Naive thymus-derived CD4-positive, alpha-beta T cell (primary cell): ENCODE measurements at regions of chr3 and their contacts with region 1.

Region 1: GRCh38 chr3:66276705-66277274 is 56.0 kb downstream of the SLC25A26 start:
- DNase-seq: peak; percentile 19 to 68 (median 56)
- ATAC-seq: peak; percentile 81
- H3K4me3 ChIP-seq: no peak overlapping the region
- H3K4me3 Mint-ChIP-seq: no peak overlapping the region
- H3K27ac ChIP-seq: no peak overlapping the region
- H3K27ac Mint-ChIP-seq: peak overlapping the region in 5 of 9 donors; percentile 9 to 61 (median 24)
- H3K4me1 ChIP-seq: peaks cover 12 to 28% of the 10 kb centered on the region in 2 donors
- H3K4me1 Mint-ChIP-seq: peaks cover 15 to 37% (median 34%) of the 10 kb centered on the region in 7 donors
- H3K27me3 ChIP-seq: no peaks in the 10 kb centered on the region
- H3K27me3 Mint-ChIP-seq: no peaks in the 10 kb centered on the region

Region 2: DNA sequence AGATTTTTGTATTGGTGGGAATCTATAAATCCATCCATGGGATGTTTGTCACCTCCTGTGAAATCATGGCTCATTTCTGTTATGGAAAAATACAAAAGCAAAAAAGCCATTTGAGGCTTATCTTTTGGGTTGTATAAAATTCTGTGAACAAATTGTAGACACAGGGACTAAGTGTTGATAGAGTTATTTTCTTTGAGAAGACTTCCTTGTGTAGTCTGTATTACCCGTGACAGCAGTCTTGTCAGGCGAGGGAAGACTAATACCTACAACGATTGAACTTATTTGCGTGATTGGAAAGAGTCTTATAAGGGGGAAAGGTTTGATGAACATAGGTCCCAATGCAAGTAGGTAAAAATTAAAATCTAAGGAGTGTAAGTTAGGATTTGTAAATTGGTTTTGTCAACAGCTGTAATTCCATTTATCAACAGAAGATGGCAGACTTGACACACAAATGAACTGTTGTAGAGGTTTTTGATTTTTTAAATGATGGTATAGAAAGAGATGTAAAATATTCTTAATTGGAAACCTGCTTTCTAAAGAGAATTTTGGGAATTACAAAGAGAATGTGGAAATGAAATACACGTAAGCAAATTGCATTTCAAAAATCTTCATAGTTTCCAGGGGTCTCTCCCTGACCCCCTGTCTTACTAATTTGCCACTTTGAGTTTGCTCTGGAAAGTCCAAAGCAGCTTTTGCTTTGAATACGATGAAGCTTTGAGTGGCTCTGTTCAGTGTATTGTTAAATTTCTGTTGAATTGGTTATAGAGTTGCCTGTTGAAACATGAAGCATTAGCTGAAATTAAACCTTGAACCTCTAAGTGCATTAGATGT is 22.8 kb before region 1 on chr3:
- CTCF ChIA-PET with region 1: interaction called, 5 read pairs
- POLR2A ChIA-PET with region 1: no interaction called
- intact Hi-C with region 1: loop called in 1 of 2 experiments (anchors 1 kb)
- DNase-seq: peak in 5 of 9 donors; percentile 27 to 41 (median 35)
- ATAC-seq: peak; percentile 59
- H3K4me3 ChIP-seq: no peak overlapping the region
- H3K4me3 Mint-ChIP-seq: no peak overlapping the region
- H3K27ac ChIP-seq: no peak overlapping the region
- H3K27ac Mint-ChIP-seq: no peak overlapping the region
- H3K4me1 ChIP-seq: no peaks in the 10 kb centered on the region
- H3K4me1 Mint-ChIP-seq: peaks cover 3 to 13% (median 8%) of the 10 kb centered on the region in 7 donors
- H3K27me3 ChIP-seq: no peaks in the 10 kb centered on the region
- H3K27me3 Mint-ChIP-seq: no peaks in the 10 kb centered on the region

Region 3: DNA sequence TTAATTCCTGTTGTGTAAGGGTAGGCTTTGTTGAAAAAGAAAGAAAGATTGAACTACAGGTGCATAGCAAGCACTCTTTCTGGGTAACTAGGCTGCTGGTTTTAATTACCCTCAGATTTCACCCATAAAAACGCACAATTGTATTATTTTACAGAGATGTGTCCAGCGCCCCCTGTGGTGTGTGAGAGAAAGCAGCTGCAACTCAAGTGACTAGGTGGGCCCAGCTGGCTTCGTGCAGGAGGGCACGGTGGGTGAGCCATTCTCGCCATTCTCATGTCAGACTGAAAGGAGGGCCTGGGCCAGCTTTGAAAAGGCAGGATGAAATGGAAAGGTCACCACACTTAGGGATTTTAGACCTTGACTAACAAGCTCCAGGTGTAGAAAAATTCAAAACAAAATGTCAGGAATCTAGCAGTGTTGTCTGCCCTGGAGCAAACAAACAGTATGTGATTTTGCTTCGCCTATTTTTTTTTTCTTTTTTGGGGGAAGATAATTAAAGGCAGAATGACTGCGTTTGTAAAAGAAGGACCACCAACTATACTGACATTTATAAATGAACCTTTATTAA is 101.5 kb after region 1 on chr3:
- CTCF ChIA-PET with region 1: interaction called, 14 read pairs
- POLR2A ChIA-PET with region 1: no interaction called
- intact Hi-C with region 1: loop called (anchors 1 kb)
- DNase-seq: peak in 5 of 9 donors; percentile 10 to 28 (median 15)
- ATAC-seq: peak; percentile 65
- H3K4me3 ChIP-seq: no peak overlapping the region
- H3K4me3 Mint-ChIP-seq: peak overlapping the region in 1 of 10 donors; percentile 21
- H3K27ac ChIP-seq: peak overlapping the region; percentile 14
- H3K27ac Mint-ChIP-seq: peak overlapping the region; percentile 71 to 95 (median 84)
- H3K4me1 ChIP-seq: peaks cover 3 to 22% of the 10 kb centered on the region in 2 donors
- H3K4me1 Mint-ChIP-seq: peaks cover 5 to 20% (median 11%) of the 10 kb centered on the region in 7 donors
- H3K27me3 ChIP-seq: no peaks in the 10 kb centered on the region
- H3K27me3 Mint-ChIP-seq: no peaks in the 10 kb centered on the region

Region 4: DNA sequence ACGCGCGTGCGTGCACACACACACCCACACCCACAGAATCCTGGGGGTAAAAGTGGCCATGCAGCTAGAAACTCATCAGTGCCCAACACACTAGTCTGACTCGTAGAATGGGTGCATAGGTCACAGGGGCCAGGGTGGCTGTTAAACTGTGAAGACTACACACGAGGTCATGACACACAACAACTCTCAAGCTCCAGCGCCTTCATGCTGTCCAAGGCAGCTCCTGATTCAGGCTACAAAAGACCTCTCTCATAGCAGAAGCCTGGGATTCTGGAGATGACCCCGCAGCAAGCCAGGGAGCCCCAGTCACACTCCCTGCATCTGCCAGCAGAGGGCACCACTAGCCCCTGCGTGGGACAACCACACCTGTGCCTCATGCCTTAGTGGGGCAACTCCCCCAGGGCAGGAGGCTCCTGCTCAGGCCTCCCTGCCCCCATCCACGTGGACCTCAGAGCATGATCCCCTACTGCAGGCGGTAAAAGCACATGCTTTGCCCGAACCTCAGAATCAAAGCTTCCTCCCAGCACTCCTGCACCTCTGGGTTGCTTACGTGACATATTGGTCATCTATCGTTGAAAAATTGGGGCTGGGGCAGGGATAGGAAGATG is 130.9 kb after region 1 on chr3:
- CTCF ChIA-PET with region 1: interaction called, 15 read pairs
- POLR2A ChIA-PET with region 1: no interaction called
- intact Hi-C with region 1: loop called (anchors 1 to 2 kb)
- DNase-seq: peak; percentile 45 to 79 (median 65)
- ATAC-seq: peak; percentile 89
- H3K4me3 ChIP-seq: no peak overlapping the region
- H3K4me3 Mint-ChIP-seq: no peak overlapping the region
- H3K27ac ChIP-seq: no peak overlapping the region
- H3K27ac Mint-ChIP-seq: no peak overlapping the region
- H3K4me1 ChIP-seq: no peaks in the 10 kb centered on the region
- H3K4me1 Mint-ChIP-seq: peaks cover 0 to 10% (median 0%) of the 10 kb centered on the region in 7 donors
- H3K27me3 ChIP-seq: no peaks in the 10 kb centered on the region
- H3K27me3 Mint-ChIP-seq: no peaks in the 10 kb centered on the region

Region 5: GRCh38 chr3:66822186-66823008 is 545.6 kb after region 1 on chr3:
- CTCF ChIA-PET with region 1: interaction called, 39 read pairs
- POLR2A ChIA-PET with region 1: no interaction called
- intact Hi-C with region 1: loop called (anchors 1 kb)
- DNase-seq: peak; percentile 27 to 66 (median 56)
- ATAC-seq: peak; percentile 85
- H3K4me3 ChIP-seq: no peak overlapping the region
- H3K4me3 Mint-ChIP-seq: no peak overlapping the region
- H3K27ac ChIP-seq: no peak overlapping the region
- H3K27ac Mint-ChIP-seq: no peak overlapping the region
- H3K4me1 ChIP-seq: no peaks in the 10 kb centered on the region
- H3K4me1 Mint-ChIP-seq: peaks cover 0 to 4% (median 0%) of the 10 kb centered on the region in 7 donors
- H3K27me3 ChIP-seq: no peaks in the 10 kb centered on the region
- H3K27me3 Mint-ChIP-seq: peaks cover 0 to 20% (median 3%) of the 10 kb centered on the region in 5 donors